GM12878 (cell line): ENCODE measurements at regions of chrX and their contacts with region 1.

Region 1: DNA sequence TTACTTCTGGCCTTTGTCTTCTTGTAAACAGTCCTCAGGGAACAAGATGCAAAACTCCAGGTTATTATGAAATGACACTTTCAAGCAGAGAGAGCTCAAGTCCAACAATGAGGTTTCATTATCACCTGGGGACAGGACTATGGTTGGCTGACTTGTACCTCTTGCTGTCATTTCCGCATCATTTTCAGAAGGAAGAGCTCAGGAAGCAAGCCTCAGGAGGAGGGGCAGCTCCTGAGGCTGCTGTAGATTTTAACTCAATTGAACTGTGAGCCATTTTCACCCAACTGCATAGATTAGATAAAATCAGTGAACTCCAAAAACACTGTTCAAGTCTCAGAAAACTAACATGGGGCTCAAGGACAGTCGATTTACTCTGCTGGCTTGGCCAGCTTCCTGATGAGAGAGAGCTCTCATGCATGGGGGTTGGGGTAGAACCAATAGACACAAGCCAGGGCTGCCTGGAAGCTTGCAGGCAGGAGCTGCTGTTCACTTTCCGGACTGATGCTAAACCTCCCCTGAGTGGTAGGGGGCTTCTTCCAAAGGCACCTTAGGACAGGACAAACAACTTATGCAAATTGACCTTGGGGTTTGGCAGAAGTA is 23.6 kb downstream of the TMEM255A start:
- DNase-seq: peak; percentile 39
- ATAC-seq: peak; percentile 76
- H3K4me3 ChIP-seq: no peak overlapping the region
- H3K27ac ChIP-seq: peak overlapping the region; percentile 76
- H3K4me1 ChIP-seq: peaks cover 18% of the 10 kb centered on the region
- H3K27me3 ChIP-seq: no peaks in the 10 kb centered on the region
- CTCF ChIP-seq: no peak
- EP300 ChIP-seq: no peak
- POLR2A ChIP-seq: no peak
- RAD21 ChIP-seq: no peak

Region 2: GRCh38 chrX:120250522-120251271 is 36.9 kb before region 1 on chrX and contains the start of gene ZBTB33:
- CTCF ChIA-PET with region 1: interaction called, 5 read pairs
- POLR2A ChIA-PET with region 1: interaction called, 4 read pairs
- RAD21 ChIA-PET with region 1: interaction called, 17 read pairs
- SMC1A ChIA-PET with region 1: interaction called, 4 read pairs
- in situ Hi-C with region 1: no loop called
- intact Hi-C with region 1: no loop called
- DNase-seq: peak; percentile 60
- ATAC-seq: peak; percentile 99
- H3K4me3 ChIP-seq: peak within 1 kb of the TSS; percentile 69
- H3K27ac ChIP-seq: peak within 1 kb of the TSS; percentile 68
- H3K4me1 ChIP-seq: no peaks in the 10 kb centered on the region
- H3K27me3 ChIP-seq: no peaks in the 10 kb centered on the region
- CTCF ChIP-seq: peak; percentile 53 to 63 (median 55); a peak in 5 of 6 replicates
- EP300 ChIP-seq: no peak
- POLR2A ChIP-seq: peak; percentile 75
- RAD21 ChIP-seq: peak; percentile 19; the same call in 1 of the 2 replicates
- polyA plus RNA-seq, gene ZBTB33: 5.2 to 5.4 TPM

Region 3: GRCh38 chrX:120262859-120263708 is 24.5 kb before region 1 on chrX:
- CTCF ChIA-PET with region 1: interaction called, 4 read pairs
- POLR2A ChIA-PET with region 1: no interaction called
- RAD21 ChIA-PET with region 1: interaction called, 4 read pairs
- SMC1A ChIA-PET with region 1: interaction called, 18 read pairs
- in situ Hi-C with region 1: no loop called
- intact Hi-C with region 1: no loop called
- DNase-seq: no peak
- ATAC-seq: peak; percentile 85
- H3K4me3 ChIP-seq: no peak overlapping the region
- H3K27ac ChIP-seq: peak overlapping the region; percentile 32; the same call in 1 of the 2 replicates
- H3K4me1 ChIP-seq: peaks cover 8% of the 10 kb centered on the region
- H3K27me3 ChIP-seq: no peaks in the 10 kb centered on the region
- CTCF ChIP-seq: no peak
- EP300 ChIP-seq: peak; percentile 22 to 35; a peak in 1 of 4 replicates
- POLR2A ChIP-seq: no peak
- RAD21 ChIP-seq: no peak

Region 4: DNA sequence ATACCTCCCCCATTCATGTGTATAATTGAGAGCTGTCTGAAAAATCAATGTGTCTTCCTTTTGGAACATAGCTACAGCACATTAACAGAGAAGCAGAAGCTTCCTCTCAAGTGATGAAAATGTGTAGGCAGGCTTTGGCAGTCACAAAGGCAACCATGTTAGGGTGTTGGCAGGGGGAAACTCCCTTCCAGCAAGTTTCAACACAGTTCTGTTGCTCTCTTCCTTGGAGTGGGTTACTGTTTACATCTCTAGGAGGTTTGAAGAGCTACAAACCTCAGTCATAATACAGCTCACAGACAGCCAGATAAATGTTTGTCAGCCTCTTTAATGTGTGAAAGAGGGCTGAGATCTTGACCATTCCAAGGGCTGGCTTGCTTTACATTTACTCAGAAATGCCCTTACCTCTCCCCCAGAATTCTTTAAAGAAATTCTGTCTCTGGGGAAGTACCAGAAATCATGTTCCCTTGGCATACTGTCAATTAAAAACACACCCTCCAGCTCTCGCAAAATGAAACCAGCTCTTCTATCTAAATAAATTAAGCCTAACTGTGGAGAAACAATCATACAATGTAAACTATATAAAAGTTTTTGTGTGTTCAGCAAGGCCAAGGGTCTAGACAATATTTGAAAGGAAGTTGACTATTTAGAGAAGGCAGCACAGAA is 18.1 kb before region 1 on chrX:
- CTCF ChIA-PET with region 1: interaction called, 4 read pairs
- POLR2A ChIA-PET with region 1: interaction called, 10 read pairs
- RAD21 ChIA-PET with region 1: interaction called, 4 read pairs
- SMC1A ChIA-PET with region 1: interaction called, 18 read pairs
- in situ Hi-C with region 1: no loop called
- intact Hi-C with region 1: no loop called
- DNase-seq: no peak
- ATAC-seq: peak; percentile 82
- H3K4me3 ChIP-seq: no peak overlapping the region
- H3K27ac ChIP-seq: no peak overlapping the region
- H3K4me1 ChIP-seq: no peaks in the 10 kb centered on the region
- H3K27me3 ChIP-seq: no peaks in the 10 kb centered on the region
- CTCF ChIP-seq: no peak
- EP300 ChIP-seq: no peak
- POLR2A ChIP-seq: no peak
- RAD21 ChIP-seq: no peak

Region 5: DNA sequence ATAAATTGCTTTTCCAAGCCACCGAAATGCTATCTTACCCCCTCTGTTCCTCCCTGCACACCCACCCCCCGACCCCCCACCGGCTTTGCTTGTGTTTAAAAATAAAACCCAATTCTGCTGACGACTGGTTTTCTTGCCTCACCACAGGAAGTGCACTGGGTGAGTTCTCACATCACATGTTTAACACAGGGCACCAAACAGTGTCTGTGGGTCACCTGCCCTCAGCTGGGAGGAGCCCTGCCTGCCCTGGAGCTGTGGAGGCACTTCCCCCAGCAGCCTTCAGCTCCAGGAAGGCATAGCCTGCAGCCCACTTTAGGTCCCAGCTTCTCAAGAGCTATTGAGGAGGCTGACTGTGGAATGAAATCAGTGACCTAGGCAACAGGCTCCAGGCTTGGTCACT is 14.8 kb after region 1 on chrX:
- CTCF ChIA-PET with region 1: interaction called, 14 read pairs
- POLR2A ChIA-PET with region 1: interaction called, 17 read pairs
- RAD21 ChIA-PET with region 1: interaction called, 19 read pairs
- SMC1A ChIA-PET with region 1: interaction called, 55 read pairs
- in situ Hi-C with region 1: no loop called
- intact Hi-C with region 1: no loop called
- DNase-seq: peak; percentile 61
- ATAC-seq: peak; percentile 96
- H3K4me3 ChIP-seq: peak overlapping the region; percentile 30; the same call in 1 of the 2 replicates
- H3K27ac ChIP-seq: peak overlapping the region; percentile 62
- H3K4me1 ChIP-seq: peaks cover 13% of the 10 kb centered on the region
- H3K27me3 ChIP-seq: no peaks in the 10 kb centered on the region
- CTCF ChIP-seq: no peak
- EP300 ChIP-seq: 0 out of 4 replicates have a peak, but pooled peaks of 1 of the 2 experiments have one; percentile 29
- POLR2A ChIP-seq: 0 out of 2 replicates have a peak, but pooled peaks have one; percentile 32
- RAD21 ChIP-seq: no peak

Region 6: DNA sequence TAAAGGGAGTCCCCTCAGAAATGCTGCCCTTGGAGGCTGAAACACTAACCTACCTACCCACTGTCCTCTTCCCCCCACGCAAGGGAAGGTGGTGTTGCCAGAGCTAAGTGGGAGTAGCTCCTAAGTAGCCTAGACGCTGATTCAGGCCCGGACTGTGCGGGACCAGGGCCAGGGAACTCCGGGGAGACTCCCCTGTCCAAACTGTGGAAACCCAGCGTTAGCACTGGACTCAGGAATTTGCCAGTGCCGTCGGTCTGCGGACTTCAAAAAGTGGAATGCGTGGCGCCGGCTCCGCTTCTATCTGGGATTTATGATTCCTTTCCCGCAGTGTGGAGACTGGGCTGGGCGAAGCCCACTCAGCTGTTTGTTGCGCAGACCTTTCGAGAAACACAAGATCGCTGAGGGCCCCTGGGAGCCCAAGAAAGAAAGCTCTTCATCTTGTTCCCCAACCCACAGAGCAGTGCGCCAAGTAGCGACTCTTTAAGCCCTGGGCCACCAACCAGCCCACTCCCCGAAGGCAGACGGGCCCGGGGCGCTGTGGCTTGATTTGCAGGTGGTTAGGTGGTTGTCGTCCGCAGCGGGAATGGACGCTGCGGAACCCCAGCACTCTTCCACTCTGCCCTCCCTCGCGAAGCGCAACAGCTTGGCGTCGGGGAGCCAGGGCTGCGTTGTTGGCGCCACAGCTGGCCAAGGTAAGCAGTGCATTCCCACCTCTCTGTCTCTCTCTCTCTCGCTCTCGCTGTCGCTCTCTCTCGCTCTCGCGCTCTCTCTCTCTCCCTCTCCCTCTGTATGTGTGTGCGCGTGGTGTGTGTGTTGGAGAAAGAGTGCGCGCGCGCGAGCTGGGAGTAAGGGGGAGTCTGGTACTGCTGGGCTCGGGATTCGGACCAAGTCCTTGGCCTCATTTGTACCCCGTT is 21.6 kb after region 1 on chrX:
- CTCF ChIA-PET with region 1: interaction called, 4 read pairs
- POLR2A ChIA-PET with region 1: interaction called, 16 read pairs
- RAD21 ChIA-PET with region 1: interaction called, 8 read pairs
- SMC1A ChIA-PET with region 1: interaction called, 55 read pairs
- in situ Hi-C with region 1: no loop called
- intact Hi-C with region 1: no loop called
- DNase-seq: peak; percentile 47
- ATAC-seq: peak; percentile 95
- H3K4me3 ChIP-seq: peak overlapping the region; percentile 49
- H3K27ac ChIP-seq: no peak overlapping the region
- H3K4me1 ChIP-seq: no peaks in the 10 kb centered on the region; the same call in 1 of the 2 replicates
- H3K27me3 ChIP-seq: peaks cover 2 to 7% of the 10 kb centered on the region in 2 experiments; a peak in 3 of 4 replicates
- CTCF ChIP-seq: peak; percentile 70 to 72 (median 71)
- EP300 ChIP-seq: no peak
- POLR2A ChIP-seq: peak; percentile 74
- RAD21 ChIP-seq: peak; percentile 46

Region 7: GRCh38 chrX:120350450-120351138 is 63.0 kb after region 1 on chrX:
- CTCF ChIA-PET with region 1: no interaction called
- POLR2A ChIA-PET with region 1: no interaction called
- RAD21 ChIA-PET with region 1: no interaction called
- SMC1A ChIA-PET with region 1: no interaction called
- in situ Hi-C with region 1: no loop called
- intact Hi-C with region 1: no loop called
- DNase-seq: no peak
- ATAC-seq: no peak
- H3K4me3 ChIP-seq: no peak overlapping the region
- H3K27ac ChIP-seq: no peak overlapping the region
- H3K4me1 ChIP-seq: no peaks in the 10 kb centered on the region
- H3K27me3 ChIP-seq: no peaks in the 10 kb centered on the region
- CTCF ChIP-seq: no peak
- EP300 ChIP-seq: no peak
- POLR2A ChIP-seq: no peak
- RAD21 ChIP-seq: no peak

Region 8: GRCh38 chrX:120603707-120604360 is 316.2 kb after region 1 on chrX and contains the start of gene MCTS1:
- CTCF ChIA-PET with region 1: no interaction called
- POLR2A ChIA-PET with region 1: no interaction called
- RAD21 ChIA-PET with region 1: no interaction called
- SMC1A ChIA-PET with region 1: no interaction called
- in situ Hi-C with region 1: no loop called
- intact Hi-C with region 1: no loop called
- DNase-seq: peak; percentile 78
- ATAC-seq: peak; percentile 95
- H3K4me3 ChIP-seq: peak within 1 kb of the TSS; percentile 74
- H3K27ac ChIP-seq: peak within 1 kb of the TSS; percentile 77
- H3K4me1 ChIP-seq: no peaks in the 10 kb centered on the region
- H3K27me3 ChIP-seq: no peaks in the 10 kb centered on the region
- CTCF ChIP-seq: no peak
- EP300 ChIP-seq: no peak
- POLR2A ChIP-seq: peak; percentile 65
- RAD21 ChIP-seq: no peak
- polyA plus RNA-seq, gene MCTS1: 214 to 238 TPM